CD4-positive, alpha-beta memory T cell (primary cell): ENCODE measurements at regions of chr1 and their contacts with region 1.

Region 1: DNA sequence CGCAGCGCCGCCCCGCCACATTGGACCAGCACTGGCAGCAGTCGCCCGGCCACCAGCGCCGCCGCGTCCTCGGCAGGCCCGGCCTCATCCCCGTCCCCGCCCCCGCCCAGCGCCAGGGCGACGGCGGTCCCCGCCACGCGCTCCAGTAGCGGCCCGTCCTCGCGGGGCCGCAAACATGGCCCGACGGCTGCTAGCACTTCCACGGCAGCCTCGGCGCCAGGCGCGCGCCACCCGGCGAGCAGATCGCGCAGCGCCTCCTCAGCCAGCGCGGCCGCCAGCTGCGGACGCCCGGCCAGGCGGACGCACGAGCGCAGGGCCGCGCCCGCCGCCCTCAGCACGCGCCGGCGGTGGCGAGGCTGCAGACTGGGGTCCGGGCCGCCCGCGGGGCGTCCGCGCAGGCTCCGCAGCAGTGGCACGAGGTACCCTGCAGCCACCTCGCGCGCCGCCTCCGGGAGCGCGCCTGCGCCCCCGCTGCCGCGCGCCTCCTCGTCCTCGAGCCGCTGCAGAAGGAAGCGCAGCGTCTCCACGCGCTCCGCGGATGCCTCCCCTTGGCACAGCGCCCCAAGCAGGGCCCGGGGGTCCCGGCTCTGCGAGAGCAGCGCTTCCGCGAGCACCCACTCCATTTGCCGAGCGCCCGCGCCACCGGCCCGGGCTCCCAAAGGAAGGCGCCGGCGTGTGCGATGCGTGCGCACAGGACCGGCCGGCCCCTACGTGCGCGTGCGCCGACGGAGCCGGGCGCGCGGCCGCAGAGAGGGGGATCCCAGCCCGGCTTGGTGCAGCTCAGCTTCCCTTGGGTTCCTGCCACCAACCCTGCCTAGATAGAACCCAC is at the start of gene TARBP1:
- DNase-seq: peak; percentile 73 to 83 (median 82)
- H3K4me3 ChIP-seq: peak within 1 kb of the TSS; percentile 47 to 63
- H3K4me3 Mint-ChIP-seq: peak within 1 kb of the TSS; percentile 87 to 93 (median 90)
- H3K27ac ChIP-seq: peak within 1 kb of the TSS; percentile 42
- H3K27ac Mint-ChIP-seq: peak within 1 kb of the TSS; percentile 57 to 96 (median 89)
- H3K4me1 ChIP-seq: peaks cover 29% of the 10 kb centered on the region
- H3K4me1 Mint-ChIP-seq: peaks cover 15 to 44% (median 27%) of the 10 kb centered on the region in 4 donors
- H3K27me3 ChIP-seq: no peaks in the 10 kb centered on the region
- H3K27me3 Mint-ChIP-seq: peaks cover 5 to 9% of the 10 kb centered on the region in 2 donors
- total RNA-seq, gene TARBP1: 25.8 to 27.5 TPM

Region 2: DNA sequence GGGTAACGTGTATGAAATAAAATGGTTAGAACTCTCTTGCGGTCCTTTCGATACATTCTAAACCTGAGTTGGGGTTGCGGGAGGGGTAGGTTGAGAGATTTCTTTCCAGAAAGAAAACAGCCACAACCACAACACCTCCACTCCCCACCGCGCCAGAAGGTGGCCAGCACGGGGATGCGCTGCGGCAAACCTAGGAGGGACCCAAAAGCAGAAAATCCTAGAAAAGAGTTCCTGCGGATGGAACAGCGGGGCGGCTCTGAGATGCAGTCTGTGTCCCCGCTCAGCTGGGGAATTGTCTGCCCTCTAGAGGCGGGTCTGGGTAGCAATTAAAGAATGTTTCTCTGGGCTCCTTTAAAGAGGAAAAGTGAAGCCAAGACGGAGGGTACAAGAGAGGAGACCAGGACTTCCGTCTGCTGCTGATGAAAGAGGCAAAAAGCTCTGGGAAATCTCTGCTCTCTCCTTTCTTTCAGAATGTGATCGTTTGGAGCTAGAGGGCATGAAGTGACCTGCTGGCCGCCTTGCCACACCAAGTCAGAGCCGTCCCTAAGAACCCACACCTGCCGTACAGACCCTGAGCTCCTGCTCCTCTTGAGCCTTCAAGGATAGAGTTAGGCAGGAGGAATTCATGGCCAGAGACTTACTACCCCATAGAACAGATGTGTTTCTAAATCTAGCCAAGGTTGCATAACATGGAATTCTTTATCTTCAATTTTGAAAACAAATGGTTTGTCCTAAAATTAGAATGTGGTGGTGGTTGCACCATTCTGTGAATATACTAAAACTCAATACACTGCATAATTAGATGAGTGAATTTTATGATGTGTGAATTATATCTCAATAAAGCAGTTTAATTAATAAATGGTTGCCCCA is 152.0 kb before region 1 on chr1:
- CTCF ChIA-PET with region 1: no interaction called
- POLR2A ChIA-PET with region 1: interaction called, 3 read pairs
- intact Hi-C with region 1: loop called (anchors 5 kb)
- DNase-seq: peak; percentile 69 to 76 (median 70)
- H3K4me3 ChIP-seq: peak overlapping the region; percentile 20 to 71
- H3K4me3 Mint-ChIP-seq: peak overlapping the region; percentile 89 to 97 (median 92)
- H3K27ac ChIP-seq: peak overlapping the region; percentile 40
- H3K27ac Mint-ChIP-seq: peak overlapping the region; percentile 52 to 98 (median 85)
- H3K4me1 ChIP-seq: peaks cover 8% of the 10 kb centered on the region
- H3K4me1 Mint-ChIP-seq: peaks cover 7 to 33% (median 18%) of the 10 kb centered on the region in 4 donors
- H3K27me3 ChIP-seq: no peaks in the 10 kb centered on the region
- H3K27me3 Mint-ChIP-seq: peaks cover 1 to 26% of the 10 kb centered on the region in 2 donors

Region 3: DNA sequence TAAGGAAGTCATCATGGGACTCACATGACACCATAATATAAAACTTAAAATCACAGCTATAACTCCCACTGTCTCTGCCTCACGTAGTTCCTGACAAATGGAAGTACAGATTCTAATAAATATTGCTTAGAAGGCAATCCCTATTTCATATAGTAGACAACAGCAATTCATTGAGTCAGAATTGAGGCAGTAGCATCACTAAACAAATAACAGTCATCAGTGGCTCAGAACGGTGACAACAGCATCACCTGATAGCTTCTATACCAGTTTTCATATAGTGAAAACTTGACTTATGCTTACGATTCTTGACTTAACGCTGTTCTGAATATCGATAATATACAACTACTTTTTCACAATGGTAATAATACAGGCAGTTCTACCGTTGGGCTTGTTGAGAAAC is 11.8 kb before region 1 on chr1:
- CTCF ChIA-PET with region 1: no interaction called
- POLR2A ChIA-PET with region 1: interaction called, 13 read pairs
- intact Hi-C with region 1: no loop called
- DNase-seq: no peak
- H3K4me3 ChIP-seq: no peak overlapping the region
- H3K4me3 Mint-ChIP-seq: no peak overlapping the region
- H3K27ac ChIP-seq: no peak overlapping the region
- H3K27ac Mint-ChIP-seq: no peak overlapping the region
- H3K4me1 ChIP-seq: no peaks in the 10 kb centered on the region
- H3K4me1 Mint-ChIP-seq: peaks cover 0 to 5% (median 4%) of the 10 kb centered on the region in 4 donors
- H3K27me3 ChIP-seq: no peaks in the 10 kb centered on the region
- H3K27me3 Mint-ChIP-seq: no peaks in the 10 kb centered on the region